Activated CD4-positive, alpha-beta T cell treated with anti-CD3 and anti-CD28 coated beads, Interleukin-2, amount 10 ng/mL, durations not matched to agents 24 days and 14 days (primary cell): ENCODE measurements at regions of chr19 and their contacts with region 1.

Region 1: DNA sequence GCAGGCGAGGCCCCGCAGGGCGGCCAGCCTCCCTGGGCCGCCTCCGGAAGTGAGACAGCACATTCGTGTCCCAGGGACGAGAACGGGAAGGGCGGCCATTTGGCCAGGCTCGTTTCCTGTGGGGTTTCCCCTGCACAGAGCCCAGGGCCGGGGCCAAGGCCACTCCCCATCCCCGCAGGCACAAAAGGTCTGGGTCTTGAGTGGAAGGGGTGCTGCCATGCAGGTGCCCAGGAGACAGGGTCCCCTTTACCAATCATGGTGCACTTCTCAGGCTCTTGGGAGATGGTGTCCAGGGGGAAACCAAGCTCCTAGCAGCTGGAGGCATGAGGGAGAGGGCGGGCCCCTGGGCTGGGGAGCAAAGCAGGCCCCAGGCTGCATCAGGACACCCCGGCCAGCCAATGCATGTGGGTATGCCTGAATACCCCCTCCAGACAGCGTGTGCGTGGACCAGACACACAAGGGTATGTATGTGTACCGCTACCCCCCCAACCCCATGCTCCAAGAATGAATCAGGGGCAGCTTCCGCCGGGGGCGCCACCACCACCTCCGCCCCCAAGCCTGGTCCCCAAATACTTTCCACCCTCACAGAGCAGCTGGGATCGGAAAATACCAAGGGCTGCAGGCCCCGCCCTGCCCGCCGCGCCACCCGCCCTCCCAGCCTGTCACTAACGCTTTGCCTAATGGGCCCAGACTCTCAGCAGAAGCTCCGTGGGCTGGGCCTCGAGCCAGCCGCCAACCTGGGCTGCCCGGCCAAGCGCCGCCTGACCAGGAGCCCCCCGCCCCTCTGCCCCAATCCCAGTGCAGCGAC is 37.6 kb upstream of the NANOS3 start:
- DNase-seq: peak; percentile 94
- H3K4me3 Mint-ChIP-seq: peak overlapping the region; percentile 94
- H3K27ac Mint-ChIP-seq: peak overlapping the region; percentile 89
- H3K4me1 Mint-ChIP-seq: peaks cover 37% of the 10 kb centered on the region
- H3K27me3 Mint-ChIP-seq: no peaks in the 10 kb centered on the region

Region 2: GRCh38 chr19:13718733-13719132 is 120.6 kb before region 1 on chr19:
- intact Hi-C with region 1: no loop called
- DNase-seq: no peak
- H3K4me3 Mint-ChIP-seq: no peak overlapping the region
- H3K27ac Mint-ChIP-seq: no peak overlapping the region
- H3K4me1 Mint-ChIP-seq: no peaks in the 10 kb centered on the region
- H3K27me3 Mint-ChIP-seq: peaks cover 11% of the 10 kb centered on the region

Region 3: DNA sequence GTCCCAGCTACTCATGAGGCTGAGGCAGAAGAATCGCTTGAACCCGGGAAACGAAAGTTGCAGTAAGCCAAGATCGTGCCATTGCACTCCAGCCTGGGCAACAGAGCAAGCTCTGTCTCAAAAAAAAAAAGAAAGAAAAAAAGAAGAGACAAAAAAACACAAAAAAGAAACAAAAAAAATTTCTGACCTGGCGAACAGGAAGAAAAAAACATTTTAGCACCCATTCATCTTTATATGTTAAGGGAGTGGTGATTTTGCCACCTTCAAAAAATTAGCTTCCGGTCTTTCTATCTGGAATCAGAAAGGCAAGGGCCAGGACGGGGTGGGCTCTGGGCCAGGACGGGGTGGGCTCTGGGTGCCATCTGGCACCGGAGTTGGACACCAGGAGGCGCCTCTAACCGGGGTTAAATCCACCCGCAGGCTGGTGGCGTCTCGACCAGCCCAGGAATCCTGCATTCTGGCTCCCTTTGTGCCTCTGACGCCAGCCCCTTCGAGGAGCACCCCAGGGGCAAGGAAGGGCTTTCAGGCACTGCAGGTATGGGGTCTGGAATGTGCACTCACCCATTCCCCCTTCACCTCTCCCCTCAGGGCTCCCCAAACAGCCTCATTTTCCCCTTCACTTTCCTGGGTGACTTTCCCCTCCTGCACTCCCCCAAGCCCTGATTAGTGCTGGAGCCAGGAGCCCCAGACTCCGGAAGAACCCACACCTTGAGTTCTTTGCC is 54.4 kb before region 1 on chr19:
- intact Hi-C with region 1: no loop called
- DNase-seq: peak; percentile 91
- H3K4me3 Mint-ChIP-seq: peak overlapping the region; percentile 35
- H3K27ac Mint-ChIP-seq: peak overlapping the region; percentile 25
- H3K4me1 Mint-ChIP-seq: peaks cover 22% of the 10 kb centered on the region
- H3K27me3 Mint-ChIP-seq: no peaks in the 10 kb centered on the region

Region 4: GRCh38 chr19:13794757-13795589 is 44.4 kb before region 1 on chr19 and contains the start of gene ZSWIM4:
- intact Hi-C with region 1: loop called (anchors 1 kb)
- DNase-seq: peak; percentile 99
- H3K4me3 Mint-ChIP-seq: peak within 1 kb of the TSS; percentile 98
- H3K27ac Mint-ChIP-seq: peak within 1 kb of the TSS; percentile 94
- H3K4me1 Mint-ChIP-seq: peaks cover 31% of the 10 kb centered on the region
- H3K27me3 Mint-ChIP-seq: no peaks in the 10 kb centered on the region
- total RNA-seq, gene ZSWIM4: 7.3 and 7.5 TPM in 2 replicates